Natural killer cell (primary cell): ENCODE measurements at regions of chr10 and their contacts with region 1.

Region 1: DNA sequence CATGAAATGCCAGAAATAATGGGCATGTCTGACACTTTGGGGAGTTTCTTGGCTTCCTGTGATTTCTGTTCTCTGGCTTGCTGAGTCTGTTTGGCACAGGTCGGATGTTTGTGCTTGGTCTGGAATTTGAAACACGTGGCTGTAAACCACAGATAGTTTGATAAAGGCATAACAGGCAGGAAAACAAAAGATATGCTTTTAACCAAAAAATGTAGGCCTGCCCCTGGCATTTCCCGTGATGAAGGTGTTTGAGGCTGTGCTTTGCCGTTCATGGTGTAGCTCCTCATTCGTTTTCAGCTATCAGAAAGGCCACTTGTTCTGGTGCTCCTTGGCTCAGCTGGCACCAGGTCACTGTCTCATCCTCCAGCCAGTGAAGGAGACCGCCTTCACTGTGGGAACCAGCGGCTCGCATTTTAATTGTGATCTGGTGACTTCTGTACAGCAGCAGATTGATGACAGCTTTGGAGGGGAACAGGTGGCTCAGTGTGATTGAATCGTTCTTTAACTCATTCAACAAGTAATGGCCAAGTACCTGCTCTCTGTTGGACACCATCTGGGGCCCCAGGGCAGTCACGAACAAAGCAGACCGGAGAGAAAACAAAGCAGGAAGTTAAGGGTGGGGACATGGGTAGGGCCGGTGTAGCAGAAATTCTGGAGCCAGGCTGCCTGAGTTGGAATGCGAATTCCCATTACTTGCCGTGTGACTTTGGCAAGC is 111.5 kb downstream of the CCNY start:
- DNase-seq: peak in 1 of 2 donors; percentile 67
- ATAC-seq: peak; percentile 60 to 70 (median 63)
- H3K4me3 ChIP-seq: no peak overlapping the region
- H3K4me3 Mint-ChIP-seq: peak overlapping the region; percentile 86
- H3K27ac ChIP-seq: peak overlapping the region; percentile 61
- H3K27ac Mint-ChIP-seq: peak overlapping the region; percentile 92 to 97
- H3K4me1 ChIP-seq: peaks cover 47% of the 10 kb centered on the region
- H3K4me1 Mint-ChIP-seq: peaks cover 64 to 74% of the 10 kb centered on the region in 2 donors
- H3K27me3 ChIP-seq: no peaks in the 10 kb centered on the region
- H3K27me3 Mint-ChIP-seq: no peaks in the 10 kb centered on the region
- CTCF ChIP-seq: no peak

Region 2: GRCh38 chr10:35355971-35356724 is 91.7 kb before region 1 on chr10:
- intact Hi-C with region 1: loop called (anchors 10 kb)
- DNase-seq: no peak
- ATAC-seq: peak; percentile 47 to 70 (median 65)
- H3K4me3 ChIP-seq: no peak overlapping the region
- H3K4me3 Mint-ChIP-seq: peak overlapping the region; percentile 33
- H3K27ac ChIP-seq: no peak overlapping the region
- H3K27ac Mint-ChIP-seq: peak overlapping the region in 1 of 2 donors; percentile 47
- H3K4me1 ChIP-seq: peaks cover 27% of the 10 kb centered on the region
- H3K4me1 Mint-ChIP-seq: peaks cover 83 to 84% of the 10 kb centered on the region in 2 donors
- H3K27me3 ChIP-seq: no peaks in the 10 kb centered on the region
- H3K27me3 Mint-ChIP-seq: no peaks in the 10 kb centered on the region
- CTCF ChIP-seq: no peak